AG04450 (cell line): ENCODE measurements at regions of chr1 and their contacts with region 1.

Region 1: GRCh38 chr1:156383023-156383422 is 14.0 kb downstream of the RHBG start:
- DNase-seq: no peak
- H3K4me3 ChIP-seq: no peak overlapping the region
- H3K27ac ChIP-seq: no peak overlapping the region
- H3K27me3 ChIP-seq: peaks cover 30% of the 10 kb centered on the region
- CTCF ChIP-seq: peak; percentile 91

Region 2: GRCh38 chr1:155145491-155145890 is 1237.5 kb before region 1 on chr1:
- CTCF ChIA-PET with region 1: no interaction called
- POLR2A ChIA-PET with region 1: no interaction called
- DNase-seq: no peak
- H3K4me3 ChIP-seq: no peak overlapping the region
- H3K27ac ChIP-seq: no peak overlapping the region
- H3K27me3 ChIP-seq: peaks cover 21% of the 10 kb centered on the region
- CTCF ChIP-seq: 0 out of 2 replicates have a peak, but pooled peaks have one; percentile 4

Region 3: GRCh38 chr1:156236164-156236563 is 146.9 kb before region 1 on chr1:
- CTCF ChIA-PET with region 1: no interaction called
- POLR2A ChIA-PET with region 1: no interaction called
- DNase-seq: no peak
- H3K4me3 ChIP-seq: no peak overlapping the region
- H3K27ac ChIP-seq: no peak overlapping the region
- H3K27me3 ChIP-seq: no peaks in the 10 kb centered on the region
- CTCF ChIP-seq: no peak

Region 4: GRCh38 chr1:156268336-156268735 is 114.7 kb before region 1 on chr1:
- CTCF ChIA-PET with region 1: no interaction called
- POLR2A ChIA-PET with region 1: no interaction called
- DNase-seq: no peak
- H3K4me3 ChIP-seq: no peak overlapping the region
- H3K27ac ChIP-seq: no peak overlapping the region
- H3K27me3 ChIP-seq: no peaks in the 10 kb centered on the region
- CTCF ChIP-seq: no peak

Region 5: GRCh38 chr1:156371553-156372264 is 11.3 kb before region 1 on chr1:
- CTCF ChIA-PET with region 1: interaction called, 82 read pairs
- POLR2A ChIA-PET with region 1: no interaction called
- DNase-seq: no peak
- H3K4me3 ChIP-seq: no peak overlapping the region
- H3K27ac ChIP-seq: no peak overlapping the region
- H3K27me3 ChIP-seq: peaks cover 32% of the 10 kb centered on the region
- CTCF ChIP-seq: no peak

Region 6: DNA sequence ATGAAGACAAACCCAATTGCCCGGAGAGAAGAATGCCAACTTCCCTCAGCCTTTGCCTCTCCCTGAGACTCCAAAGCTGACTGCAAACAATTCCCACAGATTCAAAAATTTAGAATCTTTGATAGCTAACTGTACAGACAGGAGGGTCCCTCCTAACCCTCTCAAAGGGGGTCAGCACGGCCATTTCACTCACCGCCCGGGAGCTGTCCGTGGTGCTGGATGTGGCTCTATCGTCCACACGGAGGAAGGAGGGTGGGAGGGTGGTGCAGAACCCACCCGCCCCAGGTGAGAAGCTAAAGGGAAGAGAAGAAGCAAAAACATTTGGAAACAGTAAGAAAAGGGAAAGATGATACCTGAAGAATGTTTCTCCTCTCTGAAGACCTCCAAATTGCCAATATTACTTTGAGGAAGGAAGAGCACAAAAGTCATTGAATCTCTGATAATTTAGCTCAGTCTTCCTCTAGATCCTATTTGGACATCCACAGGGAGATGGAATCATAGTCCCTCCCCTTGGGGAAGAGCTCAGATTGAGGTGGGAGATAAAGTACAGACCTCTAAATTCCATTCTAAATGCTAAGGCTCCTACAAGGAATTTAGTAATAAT is 31.5 kb after region 1 on chr1:
- CTCF ChIA-PET with region 1: interaction called, 20 read pairs
- POLR2A ChIA-PET with region 1: no interaction called
- DNase-seq: no peak
- H3K4me3 ChIP-seq: no peak overlapping the region
- H3K27ac ChIP-seq: no peak overlapping the region
- H3K27me3 ChIP-seq: peaks cover 52% of the 10 kb centered on the region
- CTCF ChIP-seq: no peak

Region 7: GRCh38 chr1:156435545-156436141 is 52.6 kb after region 1 on chr1:
- CTCF ChIA-PET with region 1: interaction called, 82 read pairs
- POLR2A ChIA-PET with region 1: no interaction called
- DNase-seq: no peak
- H3K4me3 ChIP-seq: peak overlapping the region; percentile 10; the same call in 1 of the 2 replicates
- H3K27ac ChIP-seq: no peak overlapping the region
- H3K27me3 ChIP-seq: peaks cover 95% of the 10 kb centered on the region
- CTCF ChIP-seq: no peak

Region 8: DNA sequence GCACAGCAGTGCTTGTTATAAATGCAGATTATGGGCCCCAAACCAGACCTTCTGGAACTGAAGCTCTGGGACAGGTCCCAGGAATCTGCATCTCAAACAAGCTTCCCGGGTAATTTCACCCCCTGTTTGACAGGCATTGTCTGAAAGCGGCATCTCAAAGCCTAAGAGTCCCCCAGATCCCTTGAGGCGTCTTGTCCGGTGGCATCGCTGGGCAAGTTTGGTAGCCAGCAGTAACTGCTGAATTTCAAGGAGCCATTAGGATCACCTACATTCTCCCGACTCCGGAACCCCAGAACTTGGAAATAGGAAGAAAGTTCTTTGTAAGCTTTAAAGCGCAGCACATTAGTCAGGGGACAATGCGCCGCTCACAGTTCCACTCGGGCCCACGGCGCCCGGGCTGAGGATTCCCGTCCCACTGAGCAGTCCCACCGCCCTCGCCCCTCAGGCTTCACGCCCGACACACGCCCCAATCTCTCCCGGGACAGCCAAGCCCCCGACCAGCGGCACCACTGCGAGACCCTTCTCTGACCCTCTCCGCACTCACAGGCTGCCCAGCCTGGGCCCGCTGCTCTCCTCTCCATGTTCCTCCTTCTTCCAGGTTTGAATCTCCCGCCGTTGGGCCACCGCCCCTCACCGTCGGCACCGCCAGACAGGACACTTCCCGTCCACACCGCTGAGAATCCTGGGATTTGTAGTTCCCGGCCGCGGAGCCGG is 189.1 kb after region 1 on chr1 and contains the start of gene IQGAP3:
- CTCF ChIA-PET with region 1: interaction called, 10 read pairs
- POLR2A ChIA-PET with region 1: interaction called, 3 read pairs
- DNase-seq: peak; percentile 47
- H3K4me3 ChIP-seq: peak within 1 kb of the TSS; percentile 75
- H3K27ac ChIP-seq: peak within 1 kb of the TSS; percentile 76
- H3K27me3 ChIP-seq: peaks cover 9% of the 10 kb centered on the region
- CTCF ChIP-seq: no peak
- polyA plus RNA-seq, gene IQGAP3: 6.2 and 6.3 TPM in 2 replicates

Region 9: GRCh38 chr1:156659994-156660751 is 277.1 kb after region 1 on chr1:
- CTCF ChIA-PET with region 1: interaction called, 14 read pairs
- POLR2A ChIA-PET with region 1: no interaction called
- DNase-seq: peak; percentile 97
- H3K4me3 ChIP-seq: peak overlapping the region; percentile 25; the same call in 1 of the 2 replicates
- H3K27ac ChIP-seq: peak overlapping the region; percentile 86
- H3K27me3 ChIP-seq: peaks cover 23% of the 10 kb centered on the region
- CTCF ChIP-seq: peak; percentile 95